CD8-positive, alpha-beta T cell (primary cell): ENCODE measurements at regions of chr12 and their contacts with region 1.

Region 1: DNA sequence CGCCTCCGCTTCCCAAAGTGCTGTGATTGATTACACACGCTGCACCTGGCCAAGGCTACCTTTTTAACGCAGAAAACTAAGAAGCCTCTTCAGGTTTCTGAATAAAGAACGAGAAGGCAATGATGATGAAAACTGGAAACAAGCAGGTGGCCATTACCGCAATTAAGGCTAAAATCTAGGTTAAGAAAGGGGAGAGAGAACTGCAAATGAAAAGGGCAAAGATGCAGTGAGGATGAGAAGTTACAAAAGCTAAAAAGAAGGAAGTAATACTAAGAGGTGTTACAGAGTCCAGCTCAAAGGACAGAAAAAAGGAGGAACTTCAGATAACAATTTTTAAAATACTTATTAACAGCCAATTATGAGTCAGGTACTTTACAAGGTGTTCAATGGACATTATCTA is 79.7 kb downstream of the DUSP16 start:
- DNase-seq: no peak
- ATAC-seq: no peak
- H3K4me3 ChIP-seq: peak overlapping the region in 1 of 2 experiments; percentile 11
- H3K4me3 Mint-ChIP-seq: peak overlapping the region; percentile 47
- H3K27ac ChIP-seq: peak overlapping the region; percentile 73 to 83
- H3K27ac Mint-ChIP-seq: peak overlapping the region; percentile 99
- H3K4me1 ChIP-seq: peaks cover 28% of the 10 kb centered on the region
- H3K4me1 Mint-ChIP-seq: peaks cover 52% of the 10 kb centered on the region
- H3K27me3 ChIP-seq: no peaks in the 10 kb centered on the region
- H3K27me3 Mint-ChIP-seq: no peaks in the 10 kb centered on the region
- CTCF ChIP-seq: no peak

Region 2: GRCh38 chr12:12467688-12468261 is 15.2 kb before region 1 on chr12:
- CTCF ChIA-PET with region 1: interaction called, 11 read pairs
- POLR2A ChIA-PET with region 1: interaction called, 46 read pairs
- intact Hi-C with region 1: loop called in 1 of 2 experiments (anchors 1 kb)
- DNase-seq: peak in 6 of 9 experiments; percentile 43 to 68 (median 56)
- ATAC-seq: peak; percentile 9
- H3K4me3 ChIP-seq: no peak overlapping the region
- H3K4me3 Mint-ChIP-seq: no peak overlapping the region
- H3K27ac ChIP-seq: peak overlapping the region in 1 of 2 experiments; percentile 61
- H3K27ac Mint-ChIP-seq: peak overlapping the region; percentile 90
- H3K4me1 ChIP-seq: peaks cover 37% of the 10 kb centered on the region
- H3K4me1 Mint-ChIP-seq: peaks cover 69% of the 10 kb centered on the region
- H3K27me3 ChIP-seq: no peaks in the 10 kb centered on the region
- H3K27me3 Mint-ChIP-seq: no peaks in the 10 kb centered on the region
- CTCF ChIP-seq: no peak

Region 3: GRCh38 chr12:12582895-12583303 is 99.9 kb after region 1 on chr12:
- CTCF ChIA-PET with region 1: no interaction called
- POLR2A ChIA-PET with region 1: no interaction called
- intact Hi-C with region 1: no loop called
- DNase-seq: peak in 1 of 9 experiments; percentile 12
- ATAC-seq: no peak
- H3K4me3 ChIP-seq: no peak overlapping the region
- H3K4me3 Mint-ChIP-seq: no peak overlapping the region
- H3K27ac ChIP-seq: no peak overlapping the region
- H3K27ac Mint-ChIP-seq: no peak overlapping the region
- H3K4me1 ChIP-seq: no peaks in the 10 kb centered on the region
- H3K4me1 Mint-ChIP-seq: peaks cover 6% of the 10 kb centered on the region
- H3K27me3 ChIP-seq: no peaks in the 10 kb centered on the region
- H3K27me3 Mint-ChIP-seq: no peaks in the 10 kb centered on the region
- CTCF ChIP-seq: no peak